WTC11 (cell line): ENCODE measurements at regions of chr3 and their contacts with region 1.

Region 1: GRCh38 chr3:45760878-45761711 is 35.2 kb downstream of the SLC6A20 start:
- DNase-seq: peak; percentile 68
- ATAC-seq: peak; percentile 87
- H3K4me3 Mint-ChIP-seq: no peak overlapping the region
- H3K27ac Mint-ChIP-seq: 0 out of 2 replicates have a peak overlapping the region, but pooled peaks have one; percentile 6
- H3K4me1 Mint-ChIP-seq: peaks cover 23% of the 10 kb centered on the region
- H3K27me3 Mint-ChIP-seq: no peaks in the 10 kb centered on the region; the same call in 1 of the 2 replicates
- CTCF ChIP-seq: peak; percentile 61

Region 2: GRCh38 chr3:45635477-45636256 is 125.4 kb before region 1 on chr3:
- CTCF ChIA-PET with region 1: no interaction called
- POLR2A ChIA-PET with region 1: no interaction called
- DNase-seq: peak; percentile 38
- ATAC-seq: peak; percentile 72
- H3K4me3 Mint-ChIP-seq: peak overlapping the region; percentile 22; the same call in 1 of the 2 replicates
- H3K27ac Mint-ChIP-seq: peak overlapping the region; percentile 95
- H3K4me1 Mint-ChIP-seq: peaks cover 52% of the 10 kb centered on the region
- H3K27me3 Mint-ChIP-seq: no peaks in the 10 kb centered on the region
- CTCF ChIP-seq: no peak

Region 3: GRCh38 chr3:45736707-45737106 is 24.4 kb before region 1 on chr3:
- CTCF ChIA-PET with region 1: no interaction called
- POLR2A ChIA-PET with region 1: no interaction called
- DNase-seq: no peak
- ATAC-seq: no peak
- H3K4me3 Mint-ChIP-seq: no peak overlapping the region
- H3K27ac Mint-ChIP-seq: peak overlapping the region; percentile 6; the same call in 1 of the 2 replicates
- H3K4me1 Mint-ChIP-seq: peaks cover 48% of the 10 kb centered on the region
- H3K27me3 Mint-ChIP-seq: no peaks in the 10 kb centered on the region
- CTCF ChIP-seq: no peak

Region 4: DNA sequence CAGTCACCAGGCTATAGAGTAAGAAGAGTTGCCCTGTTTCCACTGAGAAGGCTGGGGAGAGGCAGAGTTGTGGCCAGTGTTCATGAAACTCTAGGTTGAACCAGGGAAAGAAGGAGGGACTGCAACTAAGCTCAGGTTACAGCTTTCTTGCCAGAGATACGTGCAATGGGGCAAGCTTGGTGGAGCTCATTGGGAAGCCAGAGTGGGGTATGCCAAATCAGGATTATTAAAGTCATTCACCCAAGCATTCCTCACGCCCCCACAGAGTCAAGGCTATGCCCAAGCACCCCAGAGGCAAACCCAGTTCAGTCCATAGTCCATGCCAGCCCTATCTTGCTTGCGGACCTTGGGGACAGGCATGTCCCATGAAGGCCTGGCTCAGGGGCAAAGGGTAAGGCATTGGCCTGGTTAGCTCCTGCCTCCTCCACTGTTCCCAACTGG is 17.7 kb after region 1 on chr3:
- CTCF ChIA-PET with region 1: interaction called, 15 read pairs
- POLR2A ChIA-PET with region 1: no interaction called
- DNase-seq: no peak
- ATAC-seq: no peak
- H3K4me3 Mint-ChIP-seq: no peak overlapping the region
- H3K27ac Mint-ChIP-seq: no peak overlapping the region
- H3K4me1 Mint-ChIP-seq: peaks cover 23% of the 10 kb centered on the region
- H3K27me3 Mint-ChIP-seq: no peaks in the 10 kb centered on the region; the same call in 1 of the 2 replicates
- CTCF ChIP-seq: no peak

Region 5: DNA sequence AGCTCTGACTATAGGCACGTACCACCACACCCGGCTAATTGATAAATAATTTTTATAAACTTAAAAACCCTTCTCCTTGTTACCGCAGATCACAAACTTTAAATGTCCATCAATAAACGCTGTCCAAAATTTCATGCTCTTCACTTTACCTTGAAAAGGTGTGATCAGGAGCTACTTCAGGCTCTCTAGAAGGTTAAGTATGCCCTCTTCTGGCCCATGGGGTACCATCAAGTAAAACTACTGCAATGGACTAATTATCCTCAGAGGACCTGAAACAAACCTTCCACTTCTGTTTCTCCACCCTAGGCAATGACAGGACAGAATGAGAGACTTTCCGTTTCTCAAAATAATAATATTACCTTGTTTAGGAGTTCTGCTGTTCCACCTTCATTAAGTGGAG is 71.6 kb after region 1 on chr3:
- CTCF ChIA-PET with region 1: interaction called, 34 read pairs
- POLR2A ChIA-PET with region 1: interaction called, 3 read pairs
- DNase-seq: no peak
- ATAC-seq: peak; percentile 82
- H3K4me3 Mint-ChIP-seq: no peak overlapping the region
- H3K27ac Mint-ChIP-seq: no peak overlapping the region
- H3K4me1 Mint-ChIP-seq: no peaks in the 10 kb centered on the region
- H3K27me3 Mint-ChIP-seq: no peaks in the 10 kb centered on the region
- CTCF ChIP-seq: no peak